ENCODE measurements at regions of chr19 and their contacts with region 1.

Region 1: GRCh38 chr19:16628183-16628983 is at the start of gene MED26:
- DNase-seq: peak; percentile 96
- H3K4me3 Mint-ChIP-seq: peak within 1 kb of the TSS; percentile 99
- H3K27ac Mint-ChIP-seq: peak within 1 kb of the TSS; percentile 99
- H3K4me1 Mint-ChIP-seq: peaks cover 46% of the 10 kb centered on the region
- H3K27me3 Mint-ChIP-seq: no peaks in the 10 kb centered on the region
- total RNA-seq, gene MED26: 11.3 to 11.9 TPM

Region 2: GRCh38 chr19:16473875-16474392 is 154.4 kb before region 1 on chr19:
- CTCF ChIA-PET with region 1: no interaction called
- intact Hi-C with region 1: loop called (anchors 2 kb)
- DNase-seq: no peak
- H3K4me3 Mint-ChIP-seq: no peak overlapping the region
- H3K27ac Mint-ChIP-seq: no peak overlapping the region
- H3K4me1 Mint-ChIP-seq: peaks cover 21% of the 10 kb centered on the region
- H3K27me3 Mint-ChIP-seq: no peaks in the 10 kb centered on the region

Region 3: DNA sequence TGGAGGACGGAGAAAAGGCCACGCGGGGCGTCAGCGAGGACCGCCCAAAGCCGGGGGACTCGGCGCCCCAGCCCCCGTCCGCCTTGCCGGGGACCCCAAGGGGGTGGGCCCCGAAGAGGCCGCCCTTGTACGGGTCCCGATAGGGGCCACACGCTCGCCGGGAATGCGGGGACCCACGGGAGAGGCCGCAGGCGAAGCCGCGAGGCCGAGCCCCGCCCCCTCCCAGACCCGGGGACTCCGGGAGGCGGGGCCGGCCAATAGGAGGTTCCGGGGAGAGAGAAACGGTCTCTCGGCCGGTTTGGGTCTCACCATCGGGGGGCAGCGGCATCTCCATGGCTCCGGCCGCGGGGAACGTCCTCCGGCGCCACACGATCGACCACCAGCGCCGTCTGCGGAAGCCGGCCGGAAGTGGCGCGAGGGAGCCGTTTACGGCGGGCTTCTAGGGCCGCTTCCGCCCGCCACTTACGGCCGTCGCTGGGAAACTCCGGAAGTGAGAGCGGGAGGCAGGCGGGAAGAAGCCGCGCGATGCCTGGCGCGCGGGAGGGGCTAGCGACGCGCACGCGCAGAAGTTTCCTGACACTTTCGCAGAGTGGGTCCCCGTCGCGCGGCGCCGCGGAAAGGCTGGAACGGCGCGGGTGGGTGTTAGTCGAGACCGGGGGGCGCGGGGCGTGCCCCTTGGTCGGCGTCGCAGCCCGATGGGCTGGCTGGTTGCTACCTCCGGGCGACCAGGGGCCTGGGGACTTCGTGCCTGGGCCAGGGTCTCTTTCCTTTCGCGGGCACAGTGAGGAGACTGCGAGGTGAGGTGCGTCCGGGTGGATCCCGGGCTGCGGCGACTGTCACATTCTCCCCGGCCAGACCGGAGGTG is 86.1 kb before region 1 on chr19 and contains the start of gene CHERP:
- CTCF ChIA-PET with region 1: no interaction called
- intact Hi-C with region 1: loop called (anchors 1 kb)
- DNase-seq: peak; percentile 94
- H3K4me3 Mint-ChIP-seq: peak within 1 kb of the TSS; percentile 95
- H3K27ac Mint-ChIP-seq: peak within 1 kb of the TSS; percentile 92
- H3K4me1 Mint-ChIP-seq: peaks cover 63% of the 10 kb centered on the region
- H3K27me3 Mint-ChIP-seq: no peaks in the 10 kb centered on the region
- total RNA-seq, gene CHERP: 54.4 to 54.7 TPM

Region 4: GRCh38 chr19:16584248-16585141 is 43.9 kb before region 1 on chr19:
- CTCF ChIA-PET with region 1: interaction called, 4 read pairs
- intact Hi-C with region 1: loop called (anchors 1 kb)
- DNase-seq: peak; percentile 96
- H3K4me3 Mint-ChIP-seq: peak overlapping the region; percentile 79
- H3K27ac Mint-ChIP-seq: peak overlapping the region; percentile 82
- H3K4me1 Mint-ChIP-seq: peaks cover 79% of the 10 kb centered on the region
- H3K27me3 Mint-ChIP-seq: no peaks in the 10 kb centered on the region

Region 5: DNA sequence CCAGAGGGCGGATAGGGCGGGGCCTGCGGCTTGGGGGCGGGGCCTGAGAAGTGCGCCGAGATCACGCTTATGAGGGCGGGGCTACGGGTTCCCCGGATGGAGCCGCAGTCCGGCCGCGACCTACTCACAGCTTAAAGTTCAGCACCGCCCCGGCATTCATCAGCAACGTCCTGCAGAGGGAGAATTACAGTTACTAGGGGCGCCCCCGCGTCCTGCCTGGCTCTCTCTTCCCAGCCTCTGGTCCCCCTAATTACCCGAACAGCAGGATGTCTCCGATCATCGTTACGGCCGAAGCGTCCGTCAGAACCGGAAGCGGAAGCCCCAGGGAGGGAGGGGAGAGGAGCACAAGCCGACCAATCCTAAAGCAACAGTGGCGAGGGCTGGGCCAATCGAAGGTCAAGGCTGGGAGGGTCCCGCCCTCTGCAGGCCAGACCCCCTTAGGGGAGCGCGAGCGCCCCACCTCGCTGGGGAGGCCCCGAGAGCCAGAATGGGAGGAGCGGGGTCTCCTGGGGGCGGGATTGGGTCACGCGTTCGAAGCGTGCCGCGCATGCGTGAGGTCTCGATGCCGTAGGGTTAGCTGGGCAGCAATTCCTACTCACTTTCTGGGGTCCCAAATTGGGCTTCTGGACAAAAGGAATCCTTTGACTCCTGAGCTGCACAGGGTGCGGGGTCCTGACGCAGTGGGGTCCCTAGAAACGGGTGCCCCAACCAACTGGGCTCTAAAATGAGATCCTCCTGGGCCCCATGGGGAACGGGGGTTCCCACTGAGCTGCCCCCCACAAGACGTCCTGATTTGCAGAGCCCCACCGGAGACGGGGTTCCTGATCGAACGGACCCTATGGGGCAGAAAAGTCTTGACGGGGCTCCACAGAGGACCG is 31.7 kb after region 1 on chr19 and contains the start of gene SMIM7:
- CTCF ChIA-PET with region 1: no interaction called
- intact Hi-C with region 1: loop called (anchors 1 kb)
- DNase-seq: peak; percentile 98
- H3K4me3 Mint-ChIP-seq: peak within 1 kb of the TSS; percentile 92
- H3K27ac Mint-ChIP-seq: peak within 1 kb of the TSS; percentile 92
- H3K4me1 Mint-ChIP-seq: peaks cover 39% of the 10 kb centered on the region
- H3K27me3 Mint-ChIP-seq: peaks cover 6% of the 10 kb centered on the region
- total RNA-seq, gene SMIM7: 51.0 to 59.2 TPM

Measured in activated naive CD4-positive, alpha-beta T cell treated with anti-CD3 and anti-CD28 coated beads for 36 hours (primary cell).